Activated T-helper 1 cell treated with anti-CD3 and anti-CD28 coated beads, Interleukin-12 subunit alpha, Interleukin-12 subunit beta, Interleukin-2, Interleukin-4 antibody, amounts not matched to agents 30 ng/mL and 10 ng/mL and 1 ng/mL, durations not matched to agents 14 hours and 24 hours and 36 hours (primary cell): ENCODE measurements at regions of chr4 and their contacts with region 1.

Region 1: GRCh38 chr4:84503495-84504437 is 4.7 kb upstream of the NKX6-1 start:
- DNase-seq: no peak
- H3K4me3 Mint-ChIP-seq: no peak overlapping the region
- H3K27ac Mint-ChIP-seq: peak overlapping the region; percentile 46
- H3K4me1 Mint-ChIP-seq: peaks cover 5% of the 10 kb centered on the region
- H3K27me3 Mint-ChIP-seq: peaks cover 65% of the 10 kb centered on the region

Region 2: DNA sequence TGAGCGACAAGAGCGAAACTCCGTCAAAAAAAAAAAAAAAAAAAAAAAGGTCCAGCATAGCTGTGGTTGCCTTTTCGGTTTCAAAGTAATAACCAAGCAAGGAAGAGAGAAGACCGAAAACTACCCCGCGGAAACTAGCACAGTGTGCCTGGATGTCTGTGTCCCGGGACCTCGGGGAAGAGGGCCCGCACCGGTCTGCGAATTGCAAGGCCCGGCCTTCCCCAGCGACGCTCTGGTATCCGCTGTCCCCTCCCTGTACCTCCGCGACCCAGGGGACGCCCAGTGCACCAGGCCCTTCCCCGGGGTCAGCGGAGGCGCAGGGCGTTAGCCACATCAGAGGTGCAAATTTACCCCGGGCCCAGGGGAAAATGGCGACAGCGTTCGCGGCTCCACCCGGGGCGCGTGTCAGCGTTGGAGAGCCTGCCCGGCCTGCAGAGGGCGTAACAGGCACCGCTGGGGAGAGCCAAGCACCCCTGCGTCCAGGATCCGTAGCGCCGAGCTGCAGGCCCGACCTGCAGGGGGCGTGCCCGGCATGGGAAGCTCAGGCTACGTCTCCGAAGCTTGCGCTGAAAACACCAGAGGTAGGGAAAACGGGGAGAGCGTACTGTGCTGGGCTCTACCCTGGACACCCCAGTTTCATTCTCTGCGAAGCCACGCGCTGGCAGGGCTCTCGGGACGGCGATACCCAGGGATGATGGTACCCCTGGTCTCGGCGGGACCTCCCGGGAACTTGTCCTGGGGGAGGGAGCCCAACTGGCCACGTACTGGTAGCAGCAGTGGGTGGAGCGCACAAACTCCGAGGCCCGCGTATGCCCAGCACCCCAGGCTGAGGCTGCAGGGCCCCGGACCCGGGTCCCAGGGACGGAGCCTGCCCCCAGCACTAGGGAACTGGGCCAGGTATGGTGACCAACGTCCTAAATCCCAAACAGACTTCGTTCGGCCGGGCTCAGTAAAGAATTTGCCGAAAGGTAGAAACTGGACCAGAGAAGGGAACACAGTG is 20.9 kb before region 1 on chr4:
- intact Hi-C with region 1: loop called (anchors 2 kb)
- DNase-seq: no peak
- H3K4me3 Mint-ChIP-seq: no peak overlapping the region
- H3K27ac Mint-ChIP-seq: no peak overlapping the region
- H3K4me1 Mint-ChIP-seq: peaks cover 5% of the 10 kb centered on the region
- H3K27me3 Mint-ChIP-seq: peaks cover 64% of the 10 kb centered on the region

Region 3: DNA sequence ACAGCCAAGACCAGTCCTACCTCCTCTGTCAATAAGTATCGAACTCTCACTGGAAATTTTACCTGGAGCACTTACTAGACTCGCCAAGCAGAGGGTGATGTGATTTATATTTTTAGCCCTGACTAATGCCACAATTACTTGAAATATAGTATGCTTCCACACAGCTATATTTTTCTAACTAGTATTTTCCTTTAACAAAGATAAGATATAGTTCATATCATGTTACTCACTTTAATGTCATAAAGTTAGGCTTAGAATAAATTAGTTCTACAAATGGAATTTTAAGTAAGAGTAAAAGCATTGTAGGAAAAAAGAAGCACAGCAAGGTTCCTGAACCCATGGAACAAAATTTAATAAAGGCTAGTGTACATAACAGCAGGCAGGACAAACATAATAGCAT is 11.3 kb after region 1 on chr4:
- intact Hi-C with region 1: loop called (anchors 1 kb)
- DNase-seq: no peak
- H3K4me3 Mint-ChIP-seq: no peak overlapping the region
- H3K27ac Mint-ChIP-seq: no peak overlapping the region
- H3K4me1 Mint-ChIP-seq: no peaks in the 10 kb centered on the region
- H3K27me3 Mint-ChIP-seq: peaks cover 11% of the 10 kb centered on the region

Region 4: DNA sequence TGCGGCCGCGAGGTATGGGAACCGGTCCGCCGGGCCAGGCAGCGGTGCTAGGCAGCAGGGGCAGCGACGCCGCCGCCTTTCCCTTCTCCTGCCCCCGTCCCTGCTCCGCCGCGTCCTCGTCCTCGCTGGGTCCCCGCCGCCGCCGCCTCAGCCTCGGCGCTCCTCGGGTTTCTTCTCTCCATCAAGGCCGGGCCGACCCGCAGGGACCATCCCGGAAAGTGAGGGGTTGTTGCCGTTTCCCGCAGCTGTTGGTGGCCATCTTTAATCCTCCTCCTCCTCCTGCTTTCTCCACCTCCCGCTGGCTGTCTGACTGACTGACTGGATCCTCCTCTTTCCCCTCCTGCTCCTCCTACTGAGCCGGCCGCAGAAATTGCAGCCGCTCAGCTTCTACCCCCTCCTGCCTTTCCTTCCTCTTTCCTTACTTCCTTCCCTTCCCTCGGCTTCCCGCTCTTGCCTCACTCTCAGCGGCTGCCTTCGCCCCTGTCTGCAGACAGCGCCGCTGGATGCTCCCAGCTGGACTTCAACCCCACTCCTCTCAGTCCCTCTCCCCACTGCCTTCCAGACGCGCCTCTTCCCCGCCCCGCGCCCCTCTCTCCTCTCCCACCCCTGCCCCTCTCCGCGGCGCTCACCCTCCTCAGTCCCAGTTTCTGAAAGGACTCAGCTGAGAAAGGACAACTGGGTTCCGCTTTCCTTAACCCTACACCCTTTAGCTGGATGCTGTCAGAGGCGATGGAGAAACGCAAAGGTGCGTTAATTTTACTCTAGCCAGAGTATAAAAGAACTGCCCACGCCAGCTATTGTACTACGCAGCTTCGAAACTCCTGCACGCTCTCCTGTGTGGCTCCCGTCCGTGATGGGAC is 462.8 kb after region 1 on chr4 and contains the start of gene WDFY3:
- intact Hi-C with region 1: loop called (anchors 5 kb)
- DNase-seq: no peak
- H3K4me3 Mint-ChIP-seq: peak within 1 kb of the TSS; percentile 82
- H3K27ac Mint-ChIP-seq: no peak within 1 kb of the TSS
- H3K4me1 Mint-ChIP-seq: peaks cover 10% of the 10 kb centered on the region
- H3K27me3 Mint-ChIP-seq: peaks cover 40% of the 10 kb centered on the region
- total RNA-seq, gene WDFY3: 0.39 and 1.1 TPM in 2 replicates